Activated T-helper 1 cell treated with anti-CD3 and anti-CD28 coated beads, Interleukin-12 subunit alpha, Interleukin-12 subunit beta, Interleukin-2, Interleukin-4 antibody, amounts not matched to agents 30 ng/mL and 10 ng/mL and 1 ng/mL, durations not matched to agents 14 hours and 24 hours and 36 hours (primary cell): ENCODE measurements at regions of chr16 and their contacts with region 1.

Region 1: DNA sequence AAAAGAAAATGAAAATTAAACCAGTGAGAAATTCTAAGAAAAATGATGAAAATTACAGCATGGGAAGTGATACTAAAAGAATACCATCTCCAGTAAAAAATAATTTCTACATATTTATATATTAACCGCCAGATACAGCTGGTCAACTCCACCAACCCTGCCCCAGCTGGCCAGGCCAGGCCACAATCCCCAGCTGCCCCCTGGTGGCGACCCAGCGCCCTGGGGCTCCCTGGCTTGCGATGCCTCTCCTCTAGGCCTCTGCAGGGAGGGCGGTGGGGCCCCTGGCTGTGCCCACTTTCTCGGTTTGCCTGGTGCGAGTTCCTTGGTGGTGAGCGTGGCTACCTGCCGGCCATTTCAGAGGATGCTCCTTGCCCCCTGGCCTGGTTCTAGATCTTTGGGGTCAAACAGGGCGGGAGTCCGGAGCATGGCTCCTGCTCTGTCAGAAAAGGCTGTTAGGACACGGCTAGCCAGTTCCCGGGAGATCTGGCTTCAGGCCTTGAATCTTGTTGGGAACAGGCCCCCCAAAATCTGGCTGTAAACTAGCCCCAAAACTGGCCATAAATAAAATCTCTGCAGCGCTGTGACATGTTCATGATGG is 14.5 kb downstream of the GLIS2 start:
- DNase-seq: peak; percentile 48
- H3K4me3 Mint-ChIP-seq: no peak overlapping the region
- H3K27ac Mint-ChIP-seq: no peak overlapping the region
- H3K4me1 Mint-ChIP-seq: no peaks in the 10 kb centered on the region
- H3K27me3 Mint-ChIP-seq: peaks cover 13% of the 10 kb centered on the region

Region 2: DNA sequence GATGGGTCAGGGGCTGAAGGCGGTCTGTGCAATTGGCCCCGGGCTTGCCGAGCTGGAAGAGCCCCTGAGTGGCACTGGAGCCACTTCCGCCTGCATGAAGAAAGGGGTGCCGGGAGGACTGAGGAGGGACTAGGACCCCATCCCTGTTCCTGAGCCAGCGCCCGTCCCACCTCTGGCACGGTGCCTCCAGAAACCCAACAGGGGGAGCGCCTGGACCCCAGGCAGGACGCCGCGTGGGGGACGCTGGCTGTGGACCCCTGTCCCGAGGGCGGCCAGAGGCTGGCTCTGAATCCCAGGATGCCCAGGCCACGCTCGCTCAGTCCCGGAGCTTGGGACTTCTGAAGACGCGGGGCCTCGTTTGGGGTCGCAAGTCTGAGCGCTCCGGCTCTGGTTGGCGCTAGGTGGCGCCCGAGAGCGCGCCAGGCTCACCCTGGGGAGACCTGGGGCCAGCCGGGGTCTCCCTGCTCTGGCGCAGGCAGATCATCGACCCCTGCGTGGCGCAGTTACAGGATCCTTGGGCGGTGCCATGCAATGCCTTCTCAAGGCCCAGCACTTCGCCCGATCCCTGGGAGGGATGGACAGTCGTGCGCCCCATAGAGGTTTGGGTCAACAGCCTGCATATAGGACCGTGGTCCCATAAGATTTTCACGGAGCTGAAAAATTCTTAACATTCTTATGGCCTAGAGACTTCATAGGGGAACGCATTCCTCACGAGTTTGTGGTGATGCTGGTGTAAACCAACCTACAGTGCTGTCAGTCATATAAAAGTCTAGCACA is 391.3 kb before region 1 on chr16:
- intact Hi-C with region 1: loop called (anchors 2 kb)
- DNase-seq: peak; percentile 41
- H3K4me3 Mint-ChIP-seq: no peak overlapping the region
- H3K27ac Mint-ChIP-seq: no peak overlapping the region
- H3K4me1 Mint-ChIP-seq: no peaks in the 10 kb centered on the region
- H3K27me3 Mint-ChIP-seq: peaks cover 2% of the 10 kb centered on the region

Region 3: DNA sequence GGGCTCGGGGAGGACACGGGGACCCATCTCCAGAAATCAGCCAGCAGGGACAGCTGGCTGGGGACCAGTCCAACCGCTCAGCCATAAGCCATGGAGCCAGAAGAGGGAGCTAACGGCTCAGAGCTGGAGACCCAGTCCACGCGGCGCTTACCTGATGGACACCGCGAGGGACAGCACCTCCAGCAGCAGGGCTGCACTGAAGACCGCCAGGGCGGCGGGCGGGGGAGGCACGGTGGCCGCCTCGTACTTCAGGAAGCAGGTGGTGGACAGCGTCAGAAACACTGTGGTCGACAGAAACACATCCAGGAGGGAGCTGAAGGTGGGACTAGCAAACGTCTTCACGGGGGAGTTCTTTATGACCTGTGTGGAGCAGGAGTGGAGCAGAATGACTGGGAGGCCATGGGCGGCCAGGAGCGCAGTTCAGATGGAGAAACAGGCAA is 347.3 kb before region 1 on chr16:
- intact Hi-C with region 1: loop called (anchors 2 kb)
- DNase-seq: peak; percentile 29
- H3K4me3 Mint-ChIP-seq: no peak overlapping the region
- H3K27ac Mint-ChIP-seq: no peak overlapping the region
- H3K4me1 Mint-ChIP-seq: peaks cover 4% of the 10 kb centered on the region
- H3K27me3 Mint-ChIP-seq: no peaks in the 10 kb centered on the region

Region 4: DNA sequence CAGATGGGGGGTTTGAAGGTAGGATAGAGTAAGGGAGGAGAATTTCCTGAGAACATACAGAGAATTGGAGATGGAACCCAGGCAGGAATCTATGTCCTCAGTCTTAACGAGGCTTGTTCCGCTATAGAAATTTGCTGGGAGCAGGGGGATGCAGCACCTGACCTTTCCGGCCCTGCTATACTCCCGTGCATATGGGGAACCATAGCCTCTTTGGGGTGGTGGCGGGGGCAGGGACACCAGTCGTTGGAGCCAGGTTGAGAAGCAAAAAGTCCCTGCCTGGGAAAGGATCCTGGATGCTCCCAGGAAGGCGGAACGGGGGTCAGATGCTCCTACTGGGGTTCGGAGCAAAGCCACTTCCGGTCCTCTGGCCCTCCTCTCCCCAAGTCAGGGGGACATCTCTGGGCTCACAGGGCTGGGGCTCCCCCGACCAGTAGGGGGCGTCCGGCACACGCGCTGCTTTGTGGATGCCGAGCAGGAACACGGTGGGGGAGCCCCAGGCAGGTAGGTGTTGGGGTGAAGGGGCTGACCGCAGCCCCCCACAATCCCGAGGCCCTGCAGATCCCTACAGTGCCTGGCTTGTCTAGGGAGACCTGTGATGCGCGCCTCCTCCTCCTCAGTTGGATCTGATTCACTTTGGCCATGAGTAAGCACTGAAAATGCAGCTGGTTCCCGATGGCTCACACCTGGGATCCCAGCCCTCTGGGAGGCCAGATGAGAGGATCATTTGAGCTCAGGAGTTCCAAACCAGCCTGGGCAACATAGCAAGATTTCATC is 42.0 kb before region 1 on chr16:
- intact Hi-C with region 1: loop called (anchors 1 kb)
- DNase-seq: peak; percentile 70
- H3K4me3 Mint-ChIP-seq: no peak overlapping the region
- H3K27ac Mint-ChIP-seq: peak overlapping the region; percentile 63
- H3K4me1 Mint-ChIP-seq: peaks cover 14% of the 10 kb centered on the region
- H3K27me3 Mint-ChIP-seq: no peaks in the 10 kb centered on the region